B cell (primary cell): ENCODE measurements at regions of chr18 and their contacts with region 1.

Region 1: DNA sequence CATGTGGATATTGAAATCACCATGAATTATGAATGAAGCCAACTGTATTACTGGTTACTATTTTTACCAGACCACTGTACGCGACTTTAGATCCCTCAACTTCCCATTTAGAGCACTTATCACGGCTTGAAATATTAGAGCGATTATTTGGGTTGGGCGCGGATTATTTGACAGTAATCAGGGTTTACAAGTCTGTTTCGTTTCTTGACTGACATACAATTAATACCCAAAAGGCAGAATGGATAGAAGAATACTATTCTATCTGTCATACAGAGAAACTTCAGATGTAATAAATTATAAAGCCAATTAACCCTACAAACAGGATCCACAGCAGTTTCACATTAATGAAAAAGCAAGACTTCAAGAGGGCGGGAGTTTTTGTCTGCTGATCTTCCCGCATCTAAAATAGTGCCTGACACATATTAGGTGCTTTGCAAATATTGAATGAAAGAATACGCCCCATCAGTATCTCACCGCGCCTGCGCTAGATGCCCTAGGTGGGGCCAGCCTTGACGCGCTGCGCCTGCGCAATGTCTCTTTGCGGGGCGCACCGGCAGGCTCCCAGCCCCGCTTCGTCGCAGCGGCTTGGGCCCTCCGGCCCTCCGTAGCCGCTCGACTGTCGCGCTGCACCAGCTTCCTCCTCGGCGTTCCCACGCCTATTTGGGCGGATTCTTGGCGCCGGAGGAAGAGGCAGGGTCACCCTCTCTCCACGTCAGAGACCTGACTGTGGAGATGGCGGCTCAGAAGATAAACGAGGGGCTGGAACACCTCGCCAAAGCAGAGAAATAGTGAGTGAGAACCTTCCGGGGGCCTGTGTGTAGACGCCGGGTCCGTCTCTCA is at the start of gene NAPG:
- DNase-seq: peak; percentile 96
- ATAC-seq: peak; percentile 90
- H3K4me3 ChIP-seq: peak within 1 kb of the TSS; percentile 79 to 94 (median 88)
- H3K4me3 Mint-ChIP-seq: peak within 1 kb of the TSS; percentile 99
- H3K27ac ChIP-seq: peak within 1 kb of the TSS; percentile 77 to 80
- H3K27ac Mint-ChIP-seq: peak within 1 kb of the TSS; percentile 96
- H3K4me1 ChIP-seq: peaks cover 20 to 39% of the 10 kb centered on the region in 2 donors
- H3K4me1 Mint-ChIP-seq: peaks cover 51% of the 10 kb centered on the region
- H3K27me3 ChIP-seq: no peaks in the 10 kb centered on the region
- H3K27me3 Mint-ChIP-seq: no peaks in the 10 kb centered on the region
- CTCF ChIP-seq: no peak
- total RNA-seq, gene NAPG: 31.8 and 38.7 TPM in 2 replicates

Region 2: GRCh38 chr18:9971313-9971920 is 554.2 kb before region 1 on chr18:
- CTCF ChIA-PET with region 1: interaction called, 174 read pairs
- POLR2A ChIA-PET with region 1: no interaction called
- intact Hi-C with region 1: loop called (anchors 1 kb)
- DNase-seq: peak; percentile 84
- ATAC-seq: peak; percentile 81
- H3K4me3 ChIP-seq: no peak overlapping the region
- H3K4me3 Mint-ChIP-seq: no peak overlapping the region
- H3K27ac ChIP-seq: no peak overlapping the region
- H3K27ac Mint-ChIP-seq: no peak overlapping the region
- H3K4me1 ChIP-seq: peaks cover 5 to 17% of the 10 kb centered on the region in 2 donors
- H3K4me1 Mint-ChIP-seq: peaks cover 6% of the 10 kb centered on the region
- H3K27me3 ChIP-seq: peaks cover 0 to 35% (median 19%) of the 10 kb centered on the region in 4 experiments
- H3K27me3 Mint-ChIP-seq: peaks cover 30% of the 10 kb centered on the region
- CTCF ChIP-seq: peak; percentile 89